ENCODE measurements at regions of chr3 and their contacts with region 1.

Region 1: DNA sequence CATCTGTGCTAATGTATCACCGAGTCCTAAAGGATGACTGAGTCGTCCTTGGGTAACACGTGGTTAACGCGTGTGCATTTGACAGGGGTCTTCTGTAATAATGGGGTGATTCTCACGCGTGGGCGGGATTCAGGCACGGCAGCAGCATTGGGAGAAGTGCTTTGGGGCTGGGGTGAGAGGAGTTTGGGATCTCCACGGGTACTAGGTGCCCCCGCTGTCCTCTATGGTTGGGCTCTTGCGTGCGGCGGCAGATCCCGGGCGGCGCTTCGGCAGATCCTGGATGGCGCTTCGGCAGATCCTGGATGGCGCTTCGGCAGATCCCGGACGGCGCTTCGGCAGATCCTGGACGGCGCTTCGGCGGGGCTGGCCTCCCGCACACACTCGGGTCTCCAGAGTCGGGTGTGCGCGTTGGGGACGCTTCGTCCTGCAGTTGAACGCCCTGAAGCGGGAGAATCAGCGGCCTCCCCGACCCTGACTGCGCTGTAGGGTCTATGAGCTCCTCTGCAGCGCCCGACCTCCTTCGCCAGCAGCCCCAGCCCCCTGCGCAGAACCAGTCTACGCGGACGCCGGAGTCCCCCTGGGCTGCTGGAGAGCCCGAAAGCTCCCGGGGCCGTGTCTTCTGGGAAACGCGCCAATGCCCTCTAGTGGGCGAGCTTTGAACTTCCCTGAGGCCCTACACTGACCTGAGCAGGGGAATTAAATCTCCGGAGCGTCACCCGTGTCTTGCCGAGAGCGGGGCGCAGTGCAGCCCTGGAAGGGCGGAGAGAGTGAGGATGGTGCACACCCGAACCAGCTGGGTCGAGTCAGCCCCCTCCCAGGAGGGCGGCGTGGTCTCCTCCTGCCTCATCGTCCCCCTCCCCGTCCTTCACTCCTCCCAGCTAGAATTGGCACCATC is 48.1 kb upstream of the EPHB3 start:
- DNase-seq: peak; percentile 89
- H3K4me3 ChIP-seq: peak overlapping the region; percentile 42
- H3K27ac ChIP-seq: no peak overlapping the region
- H3K4me1 ChIP-seq: no peaks in the 10 kb centered on the region
- H3K27me3 ChIP-seq: peaks cover 88% of the 10 kb centered on the region
- CTCF ChIP-seq: peak; percentile 83

Region 2: GRCh38 chr3:184417619-184418327 is 95.8 kb before region 1 on chr3:
- CTCF ChIA-PET with region 1: interaction called, 5 read pairs
- POLR2A ChIA-PET with region 1: no interaction called
- intact Hi-C with region 1: loop called (anchors 5 kb)
- DNase-seq: peak; percentile 78
- H3K4me3 ChIP-seq: no peak overlapping the region
- H3K27ac ChIP-seq: no peak overlapping the region
- H3K4me1 ChIP-seq: peaks cover 10% of the 10 kb centered on the region
- H3K27me3 ChIP-seq: no peaks in the 10 kb centered on the region
- CTCF ChIP-seq: peak; percentile 91

Region 3: DNA sequence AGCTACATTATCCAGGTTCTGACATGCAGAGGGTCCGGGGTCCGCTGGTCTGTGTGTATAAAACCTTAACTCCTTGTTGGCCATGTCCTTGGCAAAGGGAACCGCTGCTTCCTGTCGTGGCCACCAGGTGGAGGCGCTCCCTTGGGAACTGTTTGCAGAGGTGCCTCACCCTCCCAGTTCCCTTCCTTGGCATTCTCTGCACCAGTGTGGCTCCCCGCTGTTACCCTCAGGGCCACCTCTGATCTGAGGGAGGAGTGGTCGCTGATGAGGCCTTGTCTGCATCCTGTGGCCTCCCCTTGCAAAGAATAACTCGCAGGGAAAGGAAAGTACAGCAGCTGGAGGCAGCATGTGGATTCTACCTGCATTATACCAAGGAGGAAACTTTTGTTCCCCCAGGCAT is 44.1 kb before region 1 on chr3:
- CTCF ChIA-PET with region 1: no interaction called
- POLR2A ChIA-PET with region 1: no interaction called
- intact Hi-C with region 1: loop called (anchors 2 kb)
- DNase-seq: peak; percentile 41
- H3K4me3 ChIP-seq: no peak overlapping the region
- H3K27ac ChIP-seq: no peak overlapping the region
- H3K4me1 ChIP-seq: no peaks in the 10 kb centered on the region
- H3K27me3 ChIP-seq: peaks cover 32% of the 10 kb centered on the region
- CTCF ChIP-seq: peak; percentile 64